CD8-positive, alpha-beta memory T cell (primary cell): ENCODE measurements at regions of chr14 and their contacts with region 1.

Region 1: DNA sequence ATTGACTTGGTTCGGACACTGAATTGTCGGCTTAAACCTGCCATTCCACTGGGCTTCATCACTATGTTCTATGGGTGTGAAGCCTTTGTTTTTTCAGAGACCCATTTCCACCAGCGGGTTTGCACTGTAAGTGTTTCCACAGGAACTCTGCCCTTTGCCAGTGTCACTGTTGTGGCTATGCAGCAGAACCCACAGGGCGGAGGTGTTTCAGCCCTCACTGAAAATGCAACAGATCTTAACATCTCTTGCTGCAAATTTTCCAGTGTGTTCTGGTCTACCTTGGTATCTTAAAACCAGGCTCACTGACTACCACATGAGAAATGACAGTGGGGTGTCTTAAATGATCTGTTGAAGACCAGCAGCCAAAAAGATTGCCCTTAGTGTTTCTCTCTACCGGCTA is 21.1 kb downstream of the PRKCH start:
- DNase-seq: peak; percentile 74 to 94 (median 90)
- H3K4me3 ChIP-seq: peak overlapping the region; percentile 22
- H3K4me3 Mint-ChIP-seq: peak overlapping the region; percentile 77 to 90 (median 82)
- H3K27ac ChIP-seq: peak overlapping the region; percentile 33
- H3K27ac Mint-ChIP-seq: peak overlapping the region; percentile 96 to 99 (median 98)
- H3K4me1 ChIP-seq: peaks cover 92% of the 10 kb centered on the region
- H3K4me1 Mint-ChIP-seq: peaks cover 95 to 97% (median 97%) of the 10 kb centered on the region in 3 donors
- H3K27me3 ChIP-seq: no peaks in the 10 kb centered on the region
- H3K27me3 Mint-ChIP-seq: no peaks in the 10 kb centered on the region

Region 2: GRCh38 chr14:61234215-61234916 is 108.1 kb before region 1 on chr14:
- CTCF ChIA-PET with region 1: no interaction called
- POLR2A ChIA-PET with region 1: no interaction called
- DNase-seq: no peak
- H3K4me3 ChIP-seq: no peak overlapping the region
- H3K4me3 Mint-ChIP-seq: no peak overlapping the region
- H3K27ac ChIP-seq: no peak overlapping the region
- H3K27ac Mint-ChIP-seq: no peak overlapping the region
- H3K4me1 ChIP-seq: no peaks in the 10 kb centered on the region
- H3K4me1 Mint-ChIP-seq: peaks cover 0 to 4% (median 0%) of the 10 kb centered on the region in 3 donors
- H3K27me3 ChIP-seq: peaks cover 4% of the 10 kb centered on the region
- H3K27me3 Mint-ChIP-seq: peaks cover 20 to 57% of the 10 kb centered on the region in 2 donors

Region 3: GRCh38 chr14:61247935-61248334 is 94.6 kb before region 1 on chr14:
- CTCF ChIA-PET with region 1: no interaction called
- POLR2A ChIA-PET with region 1: no interaction called
- DNase-seq: no peak
- H3K4me3 ChIP-seq: no peak overlapping the region
- H3K4me3 Mint-ChIP-seq: no peak overlapping the region
- H3K27ac ChIP-seq: no peak overlapping the region
- H3K27ac Mint-ChIP-seq: no peak overlapping the region
- H3K4me1 ChIP-seq: no peaks in the 10 kb centered on the region
- H3K4me1 Mint-ChIP-seq: peaks cover 3 to 6% (median 4%) of the 10 kb centered on the region in 3 donors
- H3K27me3 ChIP-seq: no peaks in the 10 kb centered on the region
- H3K27me3 Mint-ChIP-seq: peaks cover 4 to 25% of the 10 kb centered on the region in 2 donors

Region 4: DNA sequence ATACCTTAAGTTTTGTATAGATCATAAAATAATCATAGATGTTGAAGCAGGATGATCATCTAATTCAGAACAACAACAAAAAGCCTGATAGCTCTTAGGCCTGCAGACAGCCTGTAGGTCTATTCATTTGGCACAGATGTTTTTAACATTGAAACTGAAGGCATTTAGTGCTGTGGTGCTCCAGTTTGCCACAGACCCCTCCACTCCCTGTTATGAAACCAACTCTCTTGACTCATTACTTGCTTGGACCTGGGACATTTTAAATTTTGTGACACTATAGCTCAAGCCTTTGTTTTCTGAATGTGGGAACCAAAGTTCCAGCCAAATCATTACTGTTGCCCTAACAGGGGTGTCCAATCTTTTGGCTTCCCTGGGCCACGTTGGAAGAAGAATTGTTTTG is 12.0 kb before region 1 on chr14:
- CTCF ChIA-PET with region 1: interaction called, 10 read pairs
- POLR2A ChIA-PET with region 1: interaction called, 7 read pairs
- DNase-seq: no peak
- H3K4me3 ChIP-seq: peak overlapping the region; percentile 68
- H3K4me3 Mint-ChIP-seq: peak overlapping the region in 6 of 7 donors; percentile 98 to 100 (median 98)
- H3K27ac ChIP-seq: peak overlapping the region; percentile 46
- H3K27ac Mint-ChIP-seq: peak overlapping the region in 7 of 8 donors; percentile 86 to 100 (median 95)
- H3K4me1 ChIP-seq: peaks cover 91% of the 10 kb centered on the region
- H3K4me1 Mint-ChIP-seq: peaks cover 72 to 91% (median 86%) of the 10 kb centered on the region in 3 donors
- H3K27me3 ChIP-seq: no peaks in the 10 kb centered on the region
- H3K27me3 Mint-ChIP-seq: no peaks in the 10 kb centered on the region